ENCODE measurements at regions of chr10 and their contacts with region 1.

Region 1: DNA sequence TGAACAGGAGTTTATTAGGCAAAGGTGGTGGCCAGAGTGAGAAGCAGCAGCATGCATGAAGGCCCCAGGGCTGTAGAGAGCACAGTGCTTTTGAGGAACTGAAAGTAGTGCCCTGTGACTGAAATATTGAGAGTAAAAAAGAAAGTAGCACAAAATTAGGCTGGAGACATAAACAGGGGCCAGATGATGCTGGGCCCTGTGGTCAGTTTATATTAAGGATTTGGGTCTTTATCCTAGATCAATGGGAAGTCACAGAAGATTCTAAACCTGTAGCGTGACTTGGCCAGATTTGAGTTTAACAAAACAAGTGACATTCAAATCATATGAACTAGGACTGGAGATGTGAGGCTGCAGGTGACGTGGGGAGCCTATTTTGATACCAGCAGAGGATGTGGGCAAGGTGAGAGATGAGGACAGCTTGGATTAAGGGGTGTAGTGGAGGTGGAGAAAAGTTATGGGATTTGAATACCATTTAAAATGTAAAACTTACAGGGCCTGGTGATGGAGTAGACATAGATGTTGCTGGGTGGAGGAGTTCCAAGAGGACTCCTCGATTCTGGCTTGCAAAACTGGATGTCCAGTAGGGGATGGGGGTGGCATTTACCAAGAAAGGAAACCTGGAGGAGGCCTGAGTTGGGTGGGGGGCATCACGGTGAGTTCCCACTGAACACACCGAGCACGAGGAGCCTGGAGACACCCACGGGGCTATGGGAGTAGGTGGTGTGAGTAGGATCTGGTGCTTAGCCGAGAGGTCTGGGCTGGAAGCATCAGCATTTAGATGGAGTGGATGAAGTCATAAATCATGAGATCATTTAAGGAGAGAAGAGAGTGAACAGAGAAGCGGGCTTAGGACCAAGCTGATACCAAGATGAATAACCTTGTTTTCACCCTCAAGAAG is 52.8 kb downstream of the HHEX start:
- DNase-seq: peak; percentile 70 to 84 (median 75)
- H3K4me3 ChIP-seq: no peak overlapping the region
- H3K4me3 Mint-ChIP-seq: peak overlapping the region; percentile 21 to 62
- H3K27ac ChIP-seq: peak overlapping the region in 1 of 2 donors; percentile 66
- H3K27ac Mint-ChIP-seq: peak overlapping the region; percentile 80 to 91 (median 86)
- H3K4me1 ChIP-seq: peaks cover 28% of the 10 kb centered on the region in 2 donors
- H3K4me1 Mint-ChIP-seq: peaks cover 49% of the 10 kb centered on the region
- H3K27me3 ChIP-seq: no peaks in the 10 kb centered on the region
- H3K27me3 Mint-ChIP-seq: peaks cover 0 to 2% (median 0%) of the 10 kb centered on the region in 3 donors
- CTCF ChIP-seq: no peak

Region 2: DNA sequence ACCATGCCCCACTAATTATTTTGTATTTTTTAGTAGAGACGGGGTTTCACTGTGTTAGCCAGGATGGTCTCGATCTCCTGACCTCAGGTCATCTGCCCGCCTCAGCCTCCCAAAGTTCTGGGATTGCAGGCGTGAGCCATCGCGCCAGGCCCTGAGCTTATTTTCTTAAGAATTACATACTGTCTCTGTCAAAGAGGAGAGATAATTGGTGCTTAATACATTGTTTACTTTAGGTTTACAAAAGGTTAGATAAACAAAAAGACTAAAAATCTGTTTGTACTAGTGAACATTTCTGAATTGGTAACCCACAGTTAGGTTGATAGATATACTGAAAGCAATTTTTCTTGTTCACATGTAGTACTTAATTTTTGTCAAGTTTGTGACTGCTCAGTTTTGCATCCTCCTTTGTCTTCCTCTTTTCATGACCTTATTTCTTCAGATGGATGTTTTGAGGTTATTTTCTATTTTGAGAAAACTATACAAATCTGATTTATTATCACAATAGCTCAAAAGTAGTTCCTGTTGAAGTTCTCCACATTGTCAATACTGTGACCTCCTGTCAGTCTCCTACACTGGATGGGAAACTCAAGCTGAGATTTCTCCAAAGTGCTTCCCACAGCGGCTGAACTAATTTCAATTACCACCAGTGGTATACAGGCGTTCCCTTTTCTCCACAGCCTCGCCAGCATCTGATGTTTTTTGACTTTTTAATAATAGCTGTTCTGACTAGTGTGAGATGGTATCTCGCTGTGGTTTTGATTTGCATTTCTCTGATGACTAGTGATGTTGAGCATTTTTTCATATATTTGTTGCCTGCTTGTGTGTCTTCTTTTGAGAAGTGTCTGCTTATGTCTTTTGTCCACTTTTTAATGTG is 30.3 kb before region 1 on chr10:
- intact Hi-C with region 1: loop called in 1 of 2 experiments (anchors 5 kb)
- DNase-seq: peak in 1 of 3 donors; percentile 22
- H3K4me3 ChIP-seq: peak overlapping the region in 1 of 3 experiments; percentile 11
- H3K4me3 Mint-ChIP-seq: peak overlapping the region in 1 of 2 donors; percentile 76
- H3K27ac ChIP-seq: no peak overlapping the region
- H3K27ac Mint-ChIP-seq: peak overlapping the region; percentile 24 to 77 (median 48)
- H3K4me1 ChIP-seq: peaks cover 12 to 19% of the 10 kb centered on the region in 2 donors
- H3K4me1 Mint-ChIP-seq: peaks cover 21% of the 10 kb centered on the region
- H3K27me3 ChIP-seq: peaks cover 0 to 11% of the 10 kb centered on the region in 2 donors
- H3K27me3 Mint-ChIP-seq: peaks cover 18 to 26% (median 19%) of the 10 kb centered on the region in 3 donors
- CTCF ChIP-seq: no peak

Region 3: DNA sequence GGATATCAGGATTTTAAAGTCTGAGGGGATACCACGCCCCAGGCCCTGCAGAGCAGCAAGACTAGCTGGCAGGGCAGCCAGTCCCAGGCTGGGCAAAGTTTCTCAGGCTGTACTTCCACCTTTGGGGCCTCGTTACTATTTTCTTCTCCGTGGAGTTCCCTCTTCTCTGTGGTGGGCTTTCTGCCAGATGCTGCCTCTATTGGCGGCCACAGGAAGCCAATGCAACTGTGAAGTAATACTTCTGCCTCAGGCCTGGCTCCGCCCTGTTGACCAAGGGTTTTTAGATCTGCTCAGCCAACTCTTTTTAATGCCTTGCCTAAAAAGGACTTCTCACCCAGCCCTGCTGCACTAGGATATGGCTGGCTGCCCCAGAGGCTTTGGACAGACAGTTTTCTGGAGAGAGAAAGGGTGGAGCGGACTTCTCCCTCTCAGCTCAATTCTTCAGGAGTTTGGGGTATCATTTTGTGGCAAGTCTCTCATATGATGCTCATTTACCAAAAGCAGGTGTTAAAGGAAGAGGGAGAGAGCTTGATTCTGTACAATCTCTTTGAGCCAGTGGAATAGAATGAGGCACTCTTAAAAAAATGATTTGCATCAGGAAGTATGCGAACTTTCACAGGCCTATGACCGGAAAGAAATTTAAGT is 14.6 kb after region 1 on chr10:
- intact Hi-C with region 1: loop called in 1 of 2 experiments (anchors 2 kb)
- DNase-seq: peak; percentile 84 to 95 (median 90)
- H3K4me3 ChIP-seq: peak overlapping the region in 1 of 3 experiments; percentile 65
- H3K4me3 Mint-ChIP-seq: peak overlapping the region; percentile 72 to 90
- H3K27ac ChIP-seq: peak overlapping the region; percentile 58 to 82
- H3K27ac Mint-ChIP-seq: peak overlapping the region; percentile 82 to 98 (median 95)
- H3K4me1 ChIP-seq: peaks cover 86 to 90% of the 10 kb centered on the region in 2 donors
- H3K4me1 Mint-ChIP-seq: peaks cover 86% of the 10 kb centered on the region
- H3K27me3 ChIP-seq: no peaks in the 10 kb centered on the region
- H3K27me3 Mint-ChIP-seq: peaks cover 0 to 3% (median 0%) of the 10 kb centered on the region in 3 donors
- CTCF ChIP-seq: no peak

Region 4: DNA sequence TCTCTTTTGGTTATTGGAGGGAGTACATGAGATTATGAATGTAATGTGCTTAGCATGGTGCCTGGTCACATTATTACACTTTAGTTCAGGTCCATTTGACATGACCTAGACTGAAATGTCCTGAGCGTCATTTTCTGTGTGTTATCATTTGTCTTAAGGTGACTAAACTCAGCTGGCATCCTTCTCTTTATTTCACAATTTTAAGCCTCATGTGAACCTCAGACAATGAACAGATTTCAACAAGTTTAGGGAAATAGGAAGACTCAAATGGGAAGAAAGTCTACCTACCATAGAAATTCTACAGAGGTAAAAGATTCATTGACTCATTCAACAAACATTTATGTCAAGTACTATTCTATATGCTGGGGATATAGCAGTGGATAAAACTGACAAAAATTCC is 35.5 kb after region 1 on chr10:
- intact Hi-C with region 1: no loop called
- DNase-seq: no peak
- H3K4me3 ChIP-seq: no peak overlapping the region
- H3K4me3 Mint-ChIP-seq: no peak overlapping the region
- H3K27ac ChIP-seq: no peak overlapping the region
- H3K27ac Mint-ChIP-seq: no peak overlapping the region
- H3K4me1 ChIP-seq: peaks cover 0 to under 1% of the 10 kb centered on the region in 2 donors
- H3K4me1 Mint-ChIP-seq: peaks cover 11% of the 10 kb centered on the region
- H3K27me3 ChIP-seq: no peaks in the 10 kb centered on the region
- H3K27me3 Mint-ChIP-seq: peaks cover 2 to 5% (median 3%) of the 10 kb centered on the region in 3 donors
- CTCF ChIP-seq: no peak

Region 5: GRCh38 chr10:93058139-93058538 is 315.6 kb after region 1 on chr10:
- intact Hi-C with region 1: no loop called
- DNase-seq: no peak
- H3K4me3 ChIP-seq: no peak overlapping the region
- H3K4me3 Mint-ChIP-seq: no peak overlapping the region
- H3K27ac ChIP-seq: no peak overlapping the region
- H3K27ac Mint-ChIP-seq: no peak overlapping the region
- H3K4me1 ChIP-seq: peaks cover 8 to 18% of the 10 kb centered on the region in 2 donors
- H3K4me1 Mint-ChIP-seq: peaks cover 16% of the 10 kb centered on the region
- H3K27me3 ChIP-seq: peaks cover 16 to 32% of the 10 kb centered on the region in 2 donors
- H3K27me3 Mint-ChIP-seq: peaks cover 31 to 38% (median 34%) of the 10 kb centered on the region in 3 donors
- CTCF ChIP-seq: no peak